Natural killer cell (primary cell): ENCODE measurements at regions of chr20 and their contacts with region 1.

Region 1: DNA sequence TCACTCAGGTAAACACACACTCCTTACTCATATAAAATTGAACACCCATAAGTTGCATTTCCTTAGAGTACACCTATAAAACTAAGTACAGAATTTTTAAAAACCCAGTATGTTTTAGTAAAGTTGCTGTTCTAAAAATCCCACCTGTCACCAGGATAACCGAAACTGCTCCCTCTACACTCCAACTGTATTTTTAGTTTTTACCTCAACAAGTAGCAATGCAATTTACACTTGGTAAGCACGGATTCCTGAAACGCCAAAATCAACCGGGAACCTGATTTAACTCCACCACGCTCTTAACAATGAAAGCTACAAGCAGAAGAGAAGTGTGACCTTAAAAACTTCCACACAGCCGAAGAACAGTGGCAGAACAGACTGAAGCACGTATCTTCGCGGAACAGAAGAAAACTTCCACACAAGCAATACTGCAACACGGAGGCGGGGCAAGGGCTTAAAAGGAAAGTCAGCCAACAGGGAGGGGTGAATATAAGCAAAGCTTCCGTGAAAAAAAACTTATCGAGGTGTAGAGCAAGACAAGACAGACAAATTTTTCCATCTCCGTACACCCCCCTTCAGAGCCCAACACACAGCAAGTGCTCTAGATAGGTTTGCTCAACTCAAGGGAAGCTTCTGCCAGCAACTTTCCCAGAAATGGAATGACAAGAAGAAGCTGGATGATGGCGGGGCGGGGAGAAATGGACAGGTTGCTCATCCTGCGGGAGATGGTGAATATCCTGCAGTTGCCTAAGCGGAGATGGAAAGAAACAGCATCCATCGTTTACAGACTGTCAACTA is 1.4 kb downstream of the STAU1 start:
- DNase-seq: peak; percentile 37 to 83
- ATAC-seq: peak in 2 of 3 donors; percentile 11 to 22
- H3K4me3 ChIP-seq: peak overlapping the region; percentile 42
- H3K4me3 Mint-ChIP-seq: peak overlapping the region; percentile 92
- H3K27ac ChIP-seq: peak overlapping the region; percentile 82
- H3K27ac Mint-ChIP-seq: peak overlapping the region; percentile 86
- H3K4me1 ChIP-seq: peaks cover 16% of the 10 kb centered on the region
- H3K4me1 Mint-ChIP-seq: peaks cover 48 to 53% of the 10 kb centered on the region in 2 donors
- H3K27me3 ChIP-seq: no peaks in the 10 kb centered on the region
- H3K27me3 Mint-ChIP-seq: peaks cover 0 to 3% of the 10 kb centered on the region in 2 donors
- CTCF ChIP-seq: no peak

Region 2: GRCh38 chr20:49132995-49133478 is 53.7 kb before region 1 on chr20:
- intact Hi-C with region 1: loop called (anchors 5 kb)
- DNase-seq: peak in 1 of 2 donors; percentile 78
- ATAC-seq: peak in 2 of 3 donors; percentile 64 to 72
- H3K4me3 ChIP-seq: no peak overlapping the region
- H3K4me3 Mint-ChIP-seq: no peak overlapping the region
- H3K27ac ChIP-seq: no peak overlapping the region
- H3K27ac Mint-ChIP-seq: peak overlapping the region; percentile 4 to 9
- H3K4me1 ChIP-seq: no peaks in the 10 kb centered on the region
- H3K4me1 Mint-ChIP-seq: peaks cover 6 to 7% of the 10 kb centered on the region in 2 donors
- H3K27me3 ChIP-seq: no peaks in the 10 kb centered on the region
- H3K27me3 Mint-ChIP-seq: no peaks in the 10 kb centered on the region
- CTCF ChIP-seq: peak; percentile 53